Activated T-helper 2 cell treated with anti-CD3 and anti-CD28 coated beads, Interferon-gamma antibody, Interleukin-2, Interleukin-4, amounts not matched to agents 10 μg/mL and 5 μg/mL and 100 μg/mL, durations not matched to agents 14 hours and 24 hours and 36 hours (primary cell): ENCODE measurements at regions of chr1 and their contacts with region 1.

Region 1: DNA sequence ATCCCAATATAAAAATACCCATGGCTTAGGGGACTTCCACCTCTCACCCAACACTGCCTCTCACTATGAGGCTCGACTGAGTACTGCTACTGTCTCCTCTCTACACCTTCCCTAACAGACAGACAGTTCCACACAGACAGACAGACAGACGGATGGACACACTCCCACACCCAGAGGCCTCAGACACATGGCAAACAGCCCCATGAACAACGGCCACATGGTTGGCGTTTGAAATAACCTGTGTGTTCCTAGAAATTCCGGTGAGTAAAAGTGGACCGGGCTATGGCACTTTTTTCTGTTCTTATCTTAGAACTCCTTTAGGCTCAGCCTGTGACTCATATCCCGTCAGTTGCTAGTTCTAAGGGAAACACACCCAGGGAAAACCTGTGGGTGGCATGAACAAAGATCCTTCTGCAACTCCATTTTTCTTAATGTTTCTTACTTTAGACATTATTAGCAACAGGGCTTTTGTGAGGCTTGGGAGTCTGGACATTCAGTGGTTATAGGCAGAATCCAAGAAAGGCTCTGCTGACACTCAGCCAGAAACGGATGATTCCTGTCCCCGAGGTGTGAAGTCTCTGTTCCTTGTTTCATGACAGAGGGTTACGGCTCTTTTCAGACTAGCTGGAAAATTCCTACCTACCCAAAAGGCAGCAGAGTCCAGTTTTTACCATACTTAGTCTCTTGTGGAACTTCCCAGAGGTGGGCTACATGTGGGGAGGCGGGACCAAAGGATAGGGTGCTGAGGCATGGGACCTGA is 90.5 kb upstream of the TLR5 start:
- DNase-seq: no peak
- H3K4me3 Mint-ChIP-seq: no peak overlapping the region
- H3K27ac Mint-ChIP-seq: peak overlapping the region; percentile 36
- H3K4me1 Mint-ChIP-seq: peaks cover 55% of the 10 kb centered on the region
- H3K27me3 Mint-ChIP-seq: peaks cover 1% of the 10 kb centered on the region

Region 2: DNA sequence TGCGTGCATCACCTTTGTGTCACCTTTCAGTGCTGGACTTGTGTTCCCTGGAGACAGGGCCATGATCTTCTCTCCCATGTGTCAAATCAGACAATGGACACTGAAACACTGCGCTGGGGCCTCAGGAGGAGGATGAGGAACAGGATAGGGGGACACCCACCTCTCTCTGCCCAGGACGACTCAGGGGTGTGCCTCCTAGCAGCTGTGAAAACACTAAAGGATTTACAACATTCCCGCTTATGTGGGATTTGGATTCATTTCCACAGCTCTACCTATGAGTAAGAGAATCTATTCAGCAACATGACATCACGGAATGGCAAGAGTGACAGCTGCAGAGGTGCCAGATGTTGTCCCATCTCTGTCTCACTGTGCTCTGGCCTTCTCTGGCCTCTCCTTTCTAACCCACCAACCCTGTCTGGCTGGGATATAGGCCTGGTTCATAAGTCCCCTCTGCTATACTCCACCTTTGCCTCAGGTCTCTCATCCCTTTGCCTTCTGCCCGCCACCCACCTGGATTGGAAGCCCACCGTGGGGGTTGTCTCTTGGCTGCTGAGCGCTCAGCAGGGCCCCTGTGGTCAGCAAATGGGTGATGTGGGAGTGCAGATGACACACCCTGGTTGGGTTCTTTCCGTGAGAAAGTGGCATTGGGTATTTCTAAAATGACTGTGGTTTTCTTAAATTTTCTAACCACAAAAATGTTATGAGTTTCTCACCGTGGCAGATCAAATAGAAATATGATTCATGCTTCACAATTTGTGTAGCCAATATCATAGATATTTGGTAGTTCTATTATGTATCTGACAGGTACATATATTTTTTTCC is 43.5 kb before region 1 on chr1:
- intact Hi-C with region 1: loop called (anchors 1 kb)
- DNase-seq: peak; percentile 45
- H3K4me3 Mint-ChIP-seq: no peak overlapping the region
- H3K27ac Mint-ChIP-seq: peak overlapping the region; percentile 80
- H3K4me1 Mint-ChIP-seq: peaks cover 25% of the 10 kb centered on the region
- H3K27me3 Mint-ChIP-seq: peaks cover 30% of the 10 kb centered on the region

Region 3: GRCh38 chr1:223244366-223245103 is 10.9 kb after region 1 on chr1:
- intact Hi-C with region 1: loop called (anchors 1 kb)
- DNase-seq: no peak
- H3K4me3 Mint-ChIP-seq: no peak overlapping the region
- H3K27ac Mint-ChIP-seq: peak overlapping the region; percentile 46
- H3K4me1 Mint-ChIP-seq: peaks cover 32% of the 10 kb centered on the region
- H3K27me3 Mint-ChIP-seq: peaks cover 2% of the 10 kb centered on the region

Region 4: GRCh38 chr1:223298701-223299100 is 65.1 kb after region 1 on chr1:
- intact Hi-C with region 1: no loop called
- DNase-seq: no peak
- H3K4me3 Mint-ChIP-seq: no peak overlapping the region
- H3K27ac Mint-ChIP-seq: no peak overlapping the region
- H3K4me1 Mint-ChIP-seq: no peaks in the 10 kb centered on the region
- H3K27me3 Mint-ChIP-seq: no peaks in the 10 kb centered on the region

Region 5: DNA sequence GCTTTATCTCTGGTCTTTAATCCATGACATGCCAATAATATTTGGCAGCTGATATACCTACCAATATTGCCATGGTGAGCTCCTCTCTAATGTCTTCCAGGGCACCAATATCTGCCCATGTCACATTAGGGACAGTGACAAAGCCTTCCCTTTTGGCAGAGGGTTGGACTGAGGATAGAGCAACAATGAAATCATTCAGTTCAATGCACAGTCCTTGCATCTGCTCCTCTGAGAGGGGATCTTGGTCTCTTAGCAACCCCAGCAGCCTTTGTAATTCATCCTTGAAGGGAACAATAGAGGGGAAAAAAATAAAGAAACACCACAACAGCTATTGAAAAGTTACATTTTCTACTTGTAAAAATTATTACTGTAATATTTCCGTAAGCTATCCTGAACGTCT is 1054.1 kb after region 1 on chr1:
- intact Hi-C with region 1: no loop called
- DNase-seq: no peak
- H3K4me3 Mint-ChIP-seq: no peak overlapping the region
- H3K27ac Mint-ChIP-seq: no peak overlapping the region
- H3K4me1 Mint-ChIP-seq: no peaks in the 10 kb centered on the region
- H3K27me3 Mint-ChIP-seq: no peaks in the 10 kb centered on the region